ENCODE measurements at regions of chr6 and their contacts with region 1.

Region 1: DNA sequence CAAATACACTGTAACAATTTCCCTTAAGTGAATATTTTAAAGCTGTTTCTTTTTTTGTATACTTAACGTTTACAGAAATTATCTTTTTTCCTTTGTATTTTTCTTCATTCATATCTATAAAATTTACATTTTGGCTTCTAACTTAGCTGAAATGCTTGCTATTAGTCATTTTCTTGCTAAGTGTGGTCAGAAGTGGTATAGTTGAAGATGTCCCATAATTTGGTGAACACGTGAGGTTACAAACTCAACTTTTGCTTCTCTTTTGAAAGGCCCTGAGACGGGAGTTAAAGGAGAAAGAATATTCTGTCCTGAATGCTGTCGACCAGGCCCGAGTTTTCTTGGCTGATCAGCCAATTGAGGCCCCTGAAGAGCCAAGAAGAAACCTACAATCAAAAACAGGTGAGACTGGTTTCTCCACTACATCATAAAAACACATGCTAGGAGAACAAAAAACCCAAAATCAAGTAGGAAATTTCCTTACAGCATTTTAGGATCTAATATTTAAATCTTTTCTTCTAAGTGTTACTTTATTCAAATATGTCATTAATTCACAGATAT is 445.0 kb downstream of the UTRN start:
- DNase-seq: no peak
- H3K4me3 ChIP-seq: no peak overlapping the region
- H3K27ac ChIP-seq: no peak overlapping the region
- H3K4me1 ChIP-seq: 0 out of 2 replicates have a peak, but pooled peaks cover 3% of the 10 kb centered on the region
- H3K27me3 ChIP-seq: no peaks in the 10 kb centered on the region
- CTCF ChIP-seq: no peak

Region 2: DNA sequence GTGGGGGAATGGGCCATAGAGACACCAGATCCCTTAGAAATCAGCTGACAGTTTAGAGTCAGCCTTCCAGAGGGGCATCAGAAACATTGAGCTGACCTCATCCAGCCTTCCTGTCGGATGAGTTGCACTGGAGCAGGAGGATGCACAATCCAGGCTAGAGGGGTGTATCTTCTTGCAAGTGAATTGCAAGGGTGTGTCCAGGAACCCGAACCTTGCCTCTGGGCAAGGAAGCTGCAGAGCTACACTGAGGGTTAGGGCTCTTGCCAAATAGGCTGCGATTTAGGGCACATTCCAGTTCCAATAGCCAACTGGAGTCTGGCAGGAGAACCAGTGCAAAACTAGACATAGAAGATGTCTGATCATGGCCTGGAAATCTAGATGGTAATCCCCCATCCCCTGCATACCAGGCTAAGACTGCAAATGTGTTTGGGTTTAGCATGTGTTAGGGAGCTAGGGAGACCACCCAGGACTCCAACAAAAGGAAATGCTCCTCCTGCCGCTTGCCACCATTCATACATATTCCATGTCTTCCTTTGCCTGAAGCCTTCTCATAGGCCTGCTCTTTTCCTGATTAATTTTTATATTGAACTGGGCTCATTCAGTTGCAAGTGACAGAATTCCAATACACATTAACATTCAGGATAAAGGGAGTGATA is 451.4 kb before region 1 on chr6:
- CTCF ChIA-PET with region 1: no interaction called
- POLR2A ChIA-PET with region 1: interaction called, 14 read pairs
- intact Hi-C with region 1: no loop called
- DNase-seq: peak; percentile 65 to 81
- H3K4me3 ChIP-seq: no peak overlapping the region
- H3K27ac ChIP-seq: no peak overlapping the region
- H3K4me1 ChIP-seq: peaks cover 27% of the 10 kb centered on the region
- H3K27me3 ChIP-seq: no peaks in the 10 kb centered on the region
- CTCF ChIP-seq: no peak

Measured in PC-9 (cell line).